ENCODE measurements at regions of chr7 and their contacts with region 1.

Region 1: DNA sequence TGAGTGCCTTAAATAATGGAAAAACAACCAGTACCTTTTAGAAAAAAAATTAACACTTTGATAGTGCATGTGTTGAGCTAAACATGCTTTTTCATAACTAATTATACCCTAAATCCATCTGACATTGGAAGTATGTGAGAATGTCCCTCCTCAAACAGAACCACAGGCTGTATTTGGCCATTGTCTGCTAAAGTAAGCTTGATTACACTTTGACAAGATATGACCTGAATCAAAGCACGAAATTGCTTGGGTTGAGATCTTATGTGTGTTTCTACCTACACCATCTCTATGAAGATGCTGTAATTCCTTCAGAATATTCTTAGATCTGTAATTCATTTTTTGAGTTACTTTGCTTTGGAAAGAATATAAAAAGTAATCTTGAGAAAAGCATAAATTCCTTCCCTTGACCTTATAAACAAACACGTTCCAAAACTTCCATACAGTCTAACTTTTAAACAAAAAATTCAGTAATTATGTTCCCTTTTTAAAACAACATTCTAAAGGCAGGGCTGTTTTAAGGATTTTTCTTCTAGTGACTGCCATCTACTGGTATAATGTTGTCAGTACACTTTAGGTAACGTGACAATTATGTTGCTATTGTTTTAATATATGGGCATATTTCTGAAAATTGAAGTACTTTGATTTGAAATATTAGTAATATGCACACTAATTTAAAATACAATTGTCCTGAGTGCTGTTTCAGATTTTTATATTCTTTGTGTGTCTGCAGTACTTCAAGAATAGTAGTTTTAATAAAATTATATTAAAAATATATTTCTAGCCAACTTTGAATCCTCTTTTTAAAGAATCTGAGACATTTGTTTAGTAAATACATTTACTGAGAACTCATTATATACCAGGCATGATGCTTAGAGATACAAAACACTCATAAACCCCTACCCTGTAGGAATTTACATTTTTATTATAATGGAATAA is 20.9 kb downstream of the CD36 start:
- DNase-seq: no peak
- ATAC-seq: peak; percentile 71
- H3K4me3 ChIP-seq: no peak overlapping the region
- H3K27ac ChIP-seq: no peak overlapping the region
- H3K4me1 ChIP-seq: peaks cover 5% of the 10 kb centered on the region
- H3K27me3 ChIP-seq: no peaks in the 10 kb centered on the region
- CTCF ChIP-seq: peak; percentile 77

Region 2: GRCh38 chr7:80428161-80429054 is 231.0 kb before region 1 on chr7:
- intact Hi-C with region 1: loop called (anchors 10 kb)
- DNase-seq: no peak
- ATAC-seq: peak; percentile 90
- H3K4me3 ChIP-seq: no peak overlapping the region
- H3K27ac ChIP-seq: no peak overlapping the region
- H3K4me1 ChIP-seq: no peaks in the 10 kb centered on the region
- H3K27me3 ChIP-seq: no peaks in the 10 kb centered on the region
- CTCF ChIP-seq: peak; percentile 72

Region 3: GRCh38 chr7:80770675-80771081 is 111.3 kb after region 1 on chr7:
- intact Hi-C with region 1: no loop called
- DNase-seq: no peak
- ATAC-seq: peak; percentile 72
- H3K4me3 ChIP-seq: no peak overlapping the region
- H3K27ac ChIP-seq: no peak overlapping the region
- H3K4me1 ChIP-seq: no peaks in the 10 kb centered on the region
- H3K27me3 ChIP-seq: no peaks in the 10 kb centered on the region
- CTCF ChIP-seq: no peak

Region 4: GRCh38 chr7:80841423-80842218 is 182.2 kb after region 1 on chr7:
- intact Hi-C with region 1: no loop called
- DNase-seq: no peak
- ATAC-seq: no peak
- H3K4me3 ChIP-seq: no peak overlapping the region
- H3K27ac ChIP-seq: no peak overlapping the region
- H3K4me1 ChIP-seq: peaks cover 6% of the 10 kb centered on the region
- H3K27me3 ChIP-seq: no peaks in the 10 kb centered on the region
- CTCF ChIP-seq: no peak

Measured in upper lobe of right lung (tissue), 1 donor.